MCF 10A (cell line): ENCODE measurements at regions of chr9 and their contacts with region 1.

Region 1: DNA sequence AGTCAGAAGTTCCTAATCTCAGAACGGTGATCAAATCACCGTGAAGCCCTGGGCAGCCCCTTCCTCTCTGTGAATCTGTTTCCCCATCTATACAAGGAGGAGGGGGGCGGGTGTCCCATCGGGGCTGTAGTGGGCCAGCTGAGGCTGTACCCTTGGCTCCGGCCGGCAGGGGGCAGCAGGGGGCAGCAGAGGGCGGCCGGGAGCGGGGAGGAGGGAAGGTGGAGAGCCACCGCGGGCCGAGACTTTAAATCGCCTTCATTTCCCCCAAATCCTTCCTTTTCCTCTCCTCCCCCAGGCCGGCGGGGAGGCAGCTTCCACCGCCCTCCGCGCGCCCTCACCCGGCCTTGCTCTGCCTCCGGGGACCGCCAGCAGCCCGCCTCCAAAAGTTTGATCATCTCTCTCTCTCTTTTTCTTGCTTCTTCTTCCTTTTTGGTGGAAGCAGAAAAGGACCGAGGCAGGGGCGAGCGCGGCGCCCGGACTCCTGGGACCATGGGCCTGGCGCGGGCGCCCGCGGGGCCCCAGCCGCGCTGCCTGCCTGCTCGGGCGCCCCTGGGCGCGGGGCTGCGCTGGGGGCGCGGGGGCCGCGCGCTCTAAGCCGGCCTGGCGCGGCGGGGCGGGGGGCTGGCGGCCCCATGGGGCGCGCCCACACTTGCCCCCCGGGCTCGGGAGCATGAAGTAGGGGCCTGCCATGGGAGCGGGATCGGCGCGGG is at the start of gene COL27A1:
- DNase-seq: peak; percentile 77
- H3K4me3 Mint-ChIP-seq: peak within 1 kb of the TSS; percentile 70
- H3K27ac Mint-ChIP-seq: no peak within 1 kb of the TSS
- H3K4me1 Mint-ChIP-seq: peaks cover 7% of the 10 kb centered on the region
- H3K27me3 Mint-ChIP-seq: peaks cover 47% of the 10 kb centered on the region
- CTCF ChIP-seq: peak; percentile 93
- total RNA-seq, gene COL27A1: 1.3 and 2.9 TPM in 2 replicates

Region 2: GRCh38 chr9:114072184-114073140 is 83.0 kb before region 1 on chr9:
- CTCF ChIA-PET with region 1: no interaction called
- POLR2A ChIA-PET with region 1: no interaction called
- intact Hi-C with region 1: no loop called
- DNase-seq: peak; percentile 28
- H3K4me3 Mint-ChIP-seq: no peak overlapping the region
- H3K27ac Mint-ChIP-seq: no peak overlapping the region
- H3K4me1 Mint-ChIP-seq: no peaks in the 10 kb centered on the region
- H3K27me3 Mint-ChIP-seq: peaks cover 41% of the 10 kb centered on the region
- CTCF ChIP-seq: no peak

Region 3: DNA sequence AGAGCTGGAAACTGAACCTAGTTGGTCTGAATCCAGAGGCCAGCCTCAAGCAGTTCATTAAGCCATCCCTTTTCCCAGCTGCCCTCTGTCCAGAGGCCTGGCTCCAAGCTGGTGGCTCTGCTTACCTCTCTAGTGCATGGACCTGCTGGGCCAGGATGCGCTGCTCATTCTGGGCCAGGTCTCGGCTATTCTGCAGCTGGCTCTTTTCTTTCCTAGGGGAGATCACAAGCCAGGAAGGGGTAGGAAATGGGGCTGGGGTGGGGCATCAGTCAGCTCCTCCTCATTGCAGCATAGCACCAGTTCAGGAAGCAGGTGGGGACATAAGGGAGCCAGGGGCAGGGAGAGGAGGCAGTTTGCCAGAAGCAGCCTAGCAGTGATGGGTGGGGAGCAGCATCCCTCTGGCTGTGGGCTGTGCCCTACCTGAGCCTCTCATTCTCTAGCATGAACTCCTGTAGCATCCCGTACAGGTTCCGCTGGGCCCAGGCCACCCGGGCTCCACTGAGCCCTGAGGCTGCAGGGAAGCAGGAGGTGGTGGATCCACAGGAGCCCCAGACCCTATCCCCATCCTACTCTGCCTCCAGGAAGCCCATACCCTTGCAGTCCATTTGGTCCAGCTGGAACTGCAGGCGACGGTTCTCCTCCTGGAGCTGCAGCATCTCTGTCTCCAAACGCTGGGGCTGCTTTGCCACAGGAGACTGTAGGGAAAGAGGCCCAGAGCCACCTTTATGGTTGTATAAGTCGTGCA is 61.5 kb before region 1 on chr9:
- CTCF ChIA-PET with region 1: no interaction called
- POLR2A ChIA-PET with region 1: no interaction called
- intact Hi-C with region 1: no loop called
- DNase-seq: no peak
- H3K4me3 Mint-ChIP-seq: no peak overlapping the region
- H3K27ac Mint-ChIP-seq: no peak overlapping the region
- H3K4me1 Mint-ChIP-seq: no peaks in the 10 kb centered on the region
- H3K27me3 Mint-ChIP-seq: no peaks in the 10 kb centered on the region
- CTCF ChIP-seq: no peak

Region 4: DNA sequence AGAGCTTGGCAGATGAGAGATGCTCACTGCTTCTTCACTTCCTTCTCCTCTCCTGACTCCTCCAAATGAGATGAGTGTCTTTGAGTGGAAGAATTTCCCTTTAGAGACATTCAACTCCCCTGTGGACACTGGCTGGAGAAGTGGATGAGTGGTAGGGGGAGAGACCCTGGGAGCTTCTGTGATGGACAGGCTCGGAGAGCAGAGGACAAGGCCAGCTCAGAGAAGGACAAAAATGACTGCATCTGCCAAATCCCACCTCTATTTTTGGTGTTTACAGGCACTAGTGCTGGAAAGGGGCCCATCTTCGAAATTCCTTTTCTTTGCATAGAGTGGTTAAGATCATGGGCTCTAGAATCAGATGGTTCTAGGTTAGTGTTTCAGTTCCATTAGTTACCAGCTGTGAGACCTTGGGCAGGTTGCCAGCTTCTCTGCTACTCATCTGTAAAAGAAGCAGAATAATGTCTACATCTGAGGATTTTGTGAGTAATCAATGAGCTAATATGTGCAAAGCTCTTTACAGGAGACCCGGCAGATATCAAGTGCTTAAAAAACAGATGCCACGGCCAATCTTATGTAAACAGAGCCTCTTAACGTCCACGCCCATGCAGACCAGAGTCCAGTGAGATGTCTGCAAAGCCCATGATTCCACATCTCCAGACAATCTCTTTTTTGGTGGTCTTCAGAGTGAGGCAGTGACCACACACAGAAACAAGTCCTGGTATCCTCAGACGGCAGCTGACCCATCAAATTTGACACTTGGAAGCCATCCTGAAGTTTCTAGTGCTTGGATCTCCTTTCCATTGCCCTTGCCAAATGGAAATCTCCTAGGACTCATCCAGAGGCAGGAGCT is 13.6 kb before region 1 on chr9:
- CTCF ChIA-PET with region 1: interaction called, 12 read pairs
- POLR2A ChIA-PET with region 1: no interaction called
- intact Hi-C with region 1: no loop called
- DNase-seq: no peak
- H3K4me3 Mint-ChIP-seq: no peak overlapping the region
- H3K27ac Mint-ChIP-seq: no peak overlapping the region
- H3K4me1 Mint-ChIP-seq: no peaks in the 10 kb centered on the region
- H3K27me3 Mint-ChIP-seq: peaks cover 49% of the 10 kb centered on the region
- CTCF ChIP-seq: no peak

Region 5: GRCh38 chr9:114177423-114178064 is 22.1 kb after region 1 on chr9:
- CTCF ChIA-PET with region 1: interaction called, 20 read pairs
- POLR2A ChIA-PET with region 1: interaction called, 4 read pairs
- intact Hi-C with region 1: no loop called
- DNase-seq: peak; percentile 52
- H3K4me3 Mint-ChIP-seq: no peak overlapping the region
- H3K27ac Mint-ChIP-seq: no peak overlapping the region
- H3K4me1 Mint-ChIP-seq: peaks cover 10% of the 10 kb centered on the region
- H3K27me3 Mint-ChIP-seq: no peaks in the 10 kb centered on the region
- CTCF ChIP-seq: no peak

Region 6: GRCh38 chr9:114250235-114250568 is 94.8 kb after region 1 on chr9:
- CTCF ChIA-PET with region 1: no interaction called
- POLR2A ChIA-PET with region 1: no interaction called
- intact Hi-C with region 1: no loop called
- DNase-seq: no peak
- H3K4me3 Mint-ChIP-seq: no peak overlapping the region
- H3K27ac Mint-ChIP-seq: no peak overlapping the region
- H3K4me1 Mint-ChIP-seq: no peaks in the 10 kb centered on the region
- H3K27me3 Mint-ChIP-seq: peaks cover 27% of the 10 kb centered on the region
- CTCF ChIP-seq: no peak